Motor neuron (in vitro differentiated cells): ENCODE measurements at regions of chr6 and their contacts with region 1.

Region 1: DNA sequence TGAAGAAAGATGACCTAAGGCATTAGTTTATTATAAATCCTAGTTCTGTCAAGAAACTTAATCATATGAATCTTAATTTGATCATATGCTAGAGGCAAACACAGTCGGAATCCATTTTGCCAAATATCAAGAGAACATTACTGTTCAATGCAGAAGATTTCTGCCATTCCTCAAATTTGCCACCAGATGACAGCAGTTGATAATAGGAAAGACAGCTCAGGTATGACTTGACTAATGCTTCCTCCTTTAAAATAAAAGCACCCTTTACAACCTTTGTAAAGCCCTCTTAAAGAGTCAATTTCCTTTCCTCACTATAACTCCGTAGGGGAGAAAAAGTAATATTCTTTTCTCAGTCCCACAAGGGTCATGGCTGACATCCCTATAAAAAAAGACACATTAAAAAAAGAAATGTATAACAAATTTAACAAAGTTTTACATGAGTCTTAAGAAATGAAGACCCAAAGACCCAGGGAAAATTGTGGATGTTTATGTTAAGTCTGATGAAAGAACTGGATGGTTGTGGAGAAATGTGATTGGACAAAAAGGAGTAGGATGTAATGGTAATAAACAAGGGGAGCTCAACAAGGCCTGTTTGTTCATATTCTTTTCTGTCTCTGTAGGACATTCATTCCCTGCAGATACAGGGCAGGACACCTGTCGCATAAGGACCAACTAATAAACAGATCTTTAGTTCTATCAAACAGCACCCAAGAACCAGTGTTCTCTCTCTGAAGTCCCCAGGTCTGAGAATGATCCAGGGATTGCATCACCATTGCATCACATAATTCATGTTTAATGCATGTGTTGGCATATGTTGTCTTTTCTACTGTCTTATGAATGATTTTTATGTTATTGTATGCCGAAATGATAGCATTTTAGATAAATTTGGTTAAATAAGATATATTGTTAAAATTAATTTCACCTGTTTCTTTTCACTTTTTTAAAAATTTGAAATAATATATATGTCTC is 23.0 kb upstream of the IL17A start:
- ATAC-seq: peak in 3 of 8 experiments; percentile 68 to 77 (median 72)
- H3K4me3 ChIP-seq: no peak overlapping the region
- H3K27ac ChIP-seq: no peak overlapping the region
- H3K4me1 ChIP-seq: peaks cover 0 to 4% of the 10 kb centered on the region in 2 donors

Region 2: GRCh38 chr6:51213811-51214210 is 949.4 kb before region 1 on chr6:
- in situ Hi-C with region 1: no loop called
- ATAC-seq: peak in 5 of 8 experiments; percentile 31 to 80 (median 53)
- H3K4me3 ChIP-seq: no peak overlapping the region
- H3K27ac ChIP-seq: no peak overlapping the region
- H3K4me1 ChIP-seq: peaks cover 0 to 4% of the 10 kb centered on the region in 2 donors

Region 3: GRCh38 chr6:52263709-52264540 is 100.7 kb after region 1 on chr6:
- in situ Hi-C with region 1: loop called in 1 of 9 experiments (anchors 25 kb)
- ATAC-seq: peak; percentile 50 to 86 (median 68)
- H3K4me3 ChIP-seq: no peak overlapping the region
- H3K27ac ChIP-seq: no peak overlapping the region
- H3K4me1 ChIP-seq: no peaks in the 10 kb centered on the region